Ascending aorta (tissue), 2 donors: ENCODE measurements at regions of chr3 and their contacts with region 1.

Region 1: DNA sequence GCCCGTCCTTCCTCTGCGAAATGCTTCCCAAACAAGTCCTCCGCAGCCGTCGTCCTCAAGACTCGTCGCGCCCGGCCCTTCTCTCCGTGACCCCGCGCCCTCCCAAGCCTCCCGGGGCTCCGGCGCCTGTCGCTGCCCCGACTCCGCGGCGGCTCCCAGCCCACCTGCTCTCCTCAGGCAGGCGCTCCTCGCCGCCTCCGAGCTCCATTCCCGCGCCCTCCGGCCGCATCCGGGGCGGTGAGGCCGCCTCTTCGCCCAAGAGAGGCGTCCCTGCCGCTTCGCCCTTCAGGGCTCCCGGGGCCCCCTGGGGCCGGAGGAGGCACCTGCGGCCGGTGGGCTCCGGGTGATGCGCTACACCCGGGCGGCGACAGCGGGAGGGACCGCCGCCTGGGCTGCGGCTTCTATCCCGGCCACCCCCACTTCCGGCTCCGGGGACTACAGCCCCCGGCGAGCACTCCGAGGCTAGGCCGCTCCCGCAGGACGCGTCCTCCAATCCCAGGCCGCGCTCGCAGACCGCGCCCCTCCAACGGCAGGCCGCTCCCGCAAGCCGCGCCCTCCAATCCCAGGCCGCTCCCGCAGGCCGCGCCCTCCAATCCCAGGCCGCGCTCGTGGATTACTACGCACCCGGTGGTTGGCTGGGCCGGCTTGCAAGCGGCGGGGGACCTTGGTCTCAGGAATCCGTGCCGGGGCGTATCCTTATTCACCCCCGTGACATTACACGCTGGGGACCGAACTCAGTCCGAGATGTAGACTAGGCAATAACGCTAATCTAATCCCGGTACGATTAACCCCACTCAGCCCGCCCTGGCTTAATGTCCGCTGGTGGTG is at the start of gene RUBCN:
- DNase-seq: peak; percentile 84 to 97
- H3K4me3 ChIP-seq: peak within 1 kb of the TSS; percentile 87 to 99
- H3K27ac ChIP-seq: peak within 1 kb of the TSS; percentile 89 to 95
- H3K4me1 ChIP-seq: peaks cover 0 to 4% of the 10 kb centered on the region in 2 donors
- H3K27me3 ChIP-seq: no peaks in the 10 kb centered on the region
- CTCF ChIP-seq: no peak
- total RNA-seq, gene RUBCN: 27.4 TPM

Region 2: GRCh38 chr3:197711973-197712707 is 24.6 kb before region 1 on chr3:
- intact Hi-C with region 1: loop called (anchors 1 kb)
- DNase-seq: peak; percentile 79 to 95
- H3K4me3 ChIP-seq: peak overlapping the region; percentile 52 to 60
- H3K27ac ChIP-seq: peak overlapping the region; percentile 93
- H3K4me1 ChIP-seq: peaks cover 11 to 14% of the 10 kb centered on the region in 2 donors
- H3K27me3 ChIP-seq: no peaks in the 10 kb centered on the region
- CTCF ChIP-seq: no peak

Region 3: DNA sequence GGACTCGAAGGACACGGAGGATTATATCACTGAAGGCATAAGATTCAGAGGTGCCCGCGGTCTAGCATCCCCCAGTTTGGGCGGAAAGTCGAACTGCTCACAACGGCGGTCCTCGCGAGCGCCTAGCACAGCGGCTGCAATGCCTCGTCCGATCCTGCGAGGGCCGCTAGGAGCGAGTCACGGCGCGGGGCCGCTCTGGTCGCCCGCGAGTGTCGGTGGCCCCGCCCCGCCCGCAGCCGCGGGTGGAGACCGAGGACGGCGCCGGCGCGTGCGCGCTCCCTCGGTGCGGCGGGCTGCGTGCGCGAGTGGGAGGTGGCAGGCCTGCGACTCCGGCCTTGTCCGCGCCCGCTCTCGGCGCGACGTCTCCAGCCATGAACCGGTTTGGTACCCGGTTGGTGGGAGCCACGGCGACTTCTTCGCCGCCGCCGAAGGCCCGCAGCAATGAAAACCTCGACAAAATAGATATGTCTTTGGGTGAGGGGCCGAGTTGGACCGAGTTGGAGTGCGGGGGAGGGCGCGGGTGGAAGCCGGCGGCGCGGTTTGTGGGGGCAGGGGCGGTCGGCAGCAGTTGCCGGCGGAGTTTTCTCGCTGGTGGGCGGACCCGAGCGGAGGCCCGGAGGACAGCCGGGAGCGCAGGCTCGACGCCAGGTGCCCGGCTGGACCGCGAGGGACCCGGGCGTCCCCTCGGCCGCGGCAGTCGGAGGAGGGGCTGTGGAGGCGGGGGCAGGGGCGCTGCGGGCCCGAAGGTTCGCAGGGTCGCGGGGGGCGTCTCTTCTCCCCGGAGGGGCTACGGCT is 13.1 kb after region 1 on chr3 and contains the start of gene FYTTD1:
- intact Hi-C with region 1: loop called (anchors 1 kb)
- DNase-seq: peak; percentile 60 to 94
- H3K4me3 ChIP-seq: peak within 1 kb of the TSS; percentile 74 to 95
- H3K27ac ChIP-seq: peak within 1 kb of the TSS; percentile 96 to 100
- H3K4me1 ChIP-seq: peaks cover 0 to 17% of the 10 kb centered on the region in 2 donors
- H3K27me3 ChIP-seq: no peaks in the 10 kb centered on the region
- CTCF ChIP-seq: peak; percentile 48 to 73 (median 60)
- total RNA-seq, gene FYTTD1: 14.0 TPM

Region 4: DNA sequence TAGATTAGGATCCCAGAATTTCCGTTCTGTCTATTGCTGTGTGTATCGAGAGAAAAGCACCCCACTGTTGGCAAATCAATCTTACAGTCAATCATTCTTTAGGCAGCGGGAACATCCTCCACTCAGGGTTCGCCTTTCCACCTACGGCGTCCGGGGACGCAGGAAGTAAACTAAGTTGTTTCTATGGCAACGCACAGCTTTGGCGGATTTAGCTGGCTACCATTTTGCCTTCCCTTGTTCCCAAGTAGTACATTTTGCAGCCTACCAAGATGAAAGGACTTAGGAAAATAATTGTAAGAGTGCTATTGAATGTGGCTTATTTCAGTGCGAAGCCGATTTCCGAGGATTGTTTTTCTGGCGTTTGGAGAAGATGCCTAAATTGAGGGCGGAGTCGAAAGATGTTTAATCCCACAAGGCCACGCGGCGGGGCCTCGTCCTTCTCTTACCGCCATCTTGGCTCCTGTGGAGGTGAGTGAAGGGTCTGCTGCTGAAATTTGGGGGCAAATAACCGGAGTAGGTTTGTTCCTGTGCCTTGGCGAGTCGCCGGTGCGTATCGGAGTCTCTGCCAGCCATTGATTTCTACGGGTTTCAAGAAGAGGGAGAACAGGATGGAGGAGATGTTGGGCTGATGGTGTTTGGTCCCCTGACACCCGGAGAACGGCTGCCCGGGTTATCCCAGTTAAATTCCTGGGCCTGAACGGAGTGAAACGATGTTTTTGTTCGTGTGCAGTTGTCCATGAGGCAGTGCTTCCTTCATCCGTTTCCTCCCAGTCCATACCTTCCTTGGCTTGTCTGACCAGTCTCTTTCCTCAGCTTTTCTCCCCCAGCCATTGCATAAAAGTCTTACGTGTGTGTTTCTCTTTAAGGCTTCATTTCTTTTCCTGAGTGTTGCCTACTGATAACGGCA is 213.3 kb after region 1 on chr3 and contains the start of gene RPL35A:
- intact Hi-C with region 1: loop called (anchors 5 kb)
- DNase-seq: peak; percentile 25 to 93
- H3K4me3 ChIP-seq: peak within 1 kb of the TSS; percentile 62 to 71
- H3K27ac ChIP-seq: peak within 1 kb of the TSS; percentile 86 to 87
- H3K4me1 ChIP-seq: peaks cover 12 to 34% of the 10 kb centered on the region in 2 donors
- H3K27me3 ChIP-seq: no peaks in the 10 kb centered on the region
- CTCF ChIP-seq: no peak
- total RNA-seq, gene RPL35A: 291 TPM